Prostate gland (tissue), 2 donors: ENCODE measurements at regions of chr12 and their contacts with region 1.

Region 1: GRCh38 chr12:120265473-120266179 is at the start of gene PXN:
- DNase-seq: peak; percentile 84
- H3K4me3 ChIP-seq: peak within 1 kb of the TSS; percentile 67 to 93
- H3K27ac ChIP-seq: peak within 1 kb of the TSS; percentile 89 to 94
- H3K4me1 ChIP-seq: peaks cover 20% of the 10 kb centered on the region
- H3K27me3 ChIP-seq: no peaks in the 10 kb centered on the region
- CTCF ChIP-seq: peak; percentile 88 to 95 (median 91)
- POLR2A ChIP-seq: peak; percentile 82
- total RNA-seq, gene PXN: 58.3 to 113 TPM

Region 2: GRCh38 chr12:120199595-120200306 is 65.9 kb before region 1 on chr12:
- intact Hi-C with region 1: loop called (anchors 2 kb)
- DNase-seq: no peak
- H3K4me3 ChIP-seq: peak overlapping the region; percentile 72 to 97
- H3K27ac ChIP-seq: peak overlapping the region; percentile 71 to 83
- H3K4me1 ChIP-seq: peaks cover 11% of the 10 kb centered on the region
- H3K27me3 ChIP-seq: no peaks in the 10 kb centered on the region
- CTCF ChIP-seq: no peak
- POLR2A ChIP-seq: no peak

Region 3: DNA sequence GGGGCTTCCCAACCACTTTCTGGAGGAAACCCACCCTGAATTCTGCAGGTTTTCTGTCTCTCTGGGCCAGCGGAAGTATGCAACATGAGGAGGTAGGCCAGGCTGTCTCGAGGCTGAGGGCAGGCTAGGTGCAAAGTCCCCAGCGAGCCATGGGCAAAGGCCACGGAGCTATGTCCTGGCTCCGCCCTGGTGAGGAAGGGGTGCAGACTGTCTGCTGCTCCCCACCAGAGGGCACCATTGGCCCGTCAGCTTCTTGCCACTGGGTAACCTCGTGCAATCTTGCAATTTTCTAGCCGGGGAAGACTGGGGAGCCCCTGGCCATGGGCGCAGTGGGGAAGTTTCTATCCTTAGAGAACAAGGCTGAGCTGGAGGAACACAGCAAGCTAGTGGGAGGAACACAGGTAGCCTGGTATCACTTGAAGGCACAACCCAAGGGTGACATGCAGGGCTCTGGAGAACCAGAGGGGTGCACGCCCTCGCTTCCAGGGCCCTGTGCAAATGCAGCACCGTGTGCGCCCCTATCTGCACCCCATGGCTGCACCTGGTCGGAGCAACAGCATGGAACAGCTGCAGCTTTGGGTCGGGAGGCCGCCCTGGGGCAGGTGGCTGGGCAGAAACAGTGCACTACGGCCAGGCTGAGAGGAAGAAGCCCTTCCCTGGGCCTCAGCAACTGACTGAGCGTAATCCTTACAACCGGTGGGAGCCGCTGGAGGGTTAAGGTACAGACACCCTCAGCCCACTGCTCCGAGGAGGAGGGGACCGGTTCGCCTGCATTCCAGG is 37.1 kb before region 1 on chr12:
- intact Hi-C with region 1: loop called (anchors 1 kb)
- DNase-seq: peak; percentile 81
- H3K4me3 ChIP-seq: no peak overlapping the region
- H3K27ac ChIP-seq: peak overlapping the region; percentile 78 to 86
- H3K4me1 ChIP-seq: peaks cover 49% of the 10 kb centered on the region
- H3K27me3 ChIP-seq: no peaks in the 10 kb centered on the region
- CTCF ChIP-seq: peak; percentile 89 to 98 (median 94)
- POLR2A ChIP-seq: no peak

Region 4: DNA sequence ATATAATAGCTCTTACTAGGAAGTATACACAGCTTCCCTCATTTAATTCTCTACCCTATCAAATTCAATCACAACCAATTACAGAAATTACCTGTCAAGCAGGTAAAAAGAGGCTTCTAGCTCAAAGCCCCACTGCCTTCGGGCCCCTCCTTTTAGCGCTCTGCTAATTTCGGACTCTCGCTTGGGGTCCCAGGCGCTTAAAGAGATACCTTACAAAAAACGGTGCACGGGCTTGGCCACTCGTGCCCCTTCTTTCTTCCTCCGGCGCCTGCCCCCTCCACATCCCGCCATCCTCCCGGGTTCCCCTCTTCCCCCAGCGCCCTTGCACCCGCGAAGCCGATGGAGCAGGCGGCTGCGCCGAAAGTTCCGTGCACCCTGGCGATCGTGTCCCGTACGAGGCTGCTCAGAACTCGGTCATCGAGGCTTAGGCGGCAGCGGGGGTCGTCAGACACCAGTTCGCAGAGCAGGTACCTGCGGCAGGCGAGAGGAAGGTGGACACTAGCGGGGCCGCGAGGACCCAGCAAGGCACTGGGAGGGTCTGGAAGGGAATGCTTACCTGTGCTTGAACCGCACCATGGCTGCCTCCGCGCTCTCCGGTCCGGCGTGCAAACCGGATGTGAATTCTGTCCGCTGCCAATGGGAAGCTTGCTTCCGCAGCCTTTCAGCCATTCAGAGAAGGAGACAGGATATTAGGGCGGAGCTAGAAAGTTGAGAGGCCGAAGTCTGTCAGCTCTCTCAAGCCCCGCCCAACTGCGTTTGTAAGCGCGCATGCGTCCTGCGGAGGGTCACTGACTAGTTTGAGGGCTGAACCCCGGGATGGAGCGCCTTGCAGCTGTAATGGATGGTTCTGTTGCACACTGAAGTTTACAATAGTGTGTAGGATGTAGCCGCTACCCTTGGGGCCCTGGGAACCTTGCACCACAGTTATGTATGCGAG is 315.4 kb after region 1 on chr12 and contains the start of gene POP5:
- intact Hi-C with region 1: no loop called
- DNase-seq: peak; percentile 96
- H3K4me3 ChIP-seq: peak within 1 kb of the TSS; percentile 70 to 76
- H3K27ac ChIP-seq: peak within 1 kb of the TSS; percentile 57 to 64
- H3K4me1 ChIP-seq: peaks cover 7% of the 10 kb centered on the region
- H3K27me3 ChIP-seq: no peaks in the 10 kb centered on the region
- CTCF ChIP-seq: peak in 1 of 4 experiments; percentile 23
- POLR2A ChIP-seq: peak; percentile 28
- total RNA-seq, gene POP5: 39.3 to 45.2 TPM